PC-3 (cell line): ENCODE measurements at regions of chr6 and their contacts with region 1.

Region 1: GRCh38 chr6:145633981-145634627 is 101.2 kb downstream of the EPM2A start:
- DNase-seq: peak; percentile 86
- ATAC-seq: peak; percentile 82
- H3K4me3 ChIP-seq: no peak overlapping the region
- H3K27ac ChIP-seq: no peak overlapping the region
- H3K4me1 ChIP-seq: no peaks in the 10 kb centered on the region
- H3K27me3 ChIP-seq: no peaks in the 10 kb centered on the region
- CTCF ChIP-seq: peak; percentile 81

Region 2: GRCh38 chr6:145147981-145148783 is 485.9 kb before region 1 on chr6:
- CTCF ChIA-PET with region 1: no interaction called
- POLR2A ChIA-PET with region 1: no interaction called
- intact Hi-C with region 1: loop called (anchors 10 kb)
- DNase-seq: peak; percentile 91
- ATAC-seq: peak; percentile 70
- H3K4me3 ChIP-seq: no peak overlapping the region
- H3K27ac ChIP-seq: peak overlapping the region; percentile 50
- H3K4me1 ChIP-seq: peaks cover 31% of the 10 kb centered on the region
- H3K27me3 ChIP-seq: no peaks in the 10 kb centered on the region
- CTCF ChIP-seq: no peak

Region 3: GRCh38 chr6:145214570-145214969 is 419.5 kb before region 1 on chr6:
- CTCF ChIA-PET with region 1: no interaction called
- POLR2A ChIA-PET with region 1: no interaction called
- intact Hi-C with region 1: loop called (anchors 5 kb)
- DNase-seq: peak; percentile 53
- ATAC-seq: no peak
- H3K4me3 ChIP-seq: no peak overlapping the region
- H3K27ac ChIP-seq: no peak overlapping the region
- H3K4me1 ChIP-seq: no peaks in the 10 kb centered on the region
- H3K27me3 ChIP-seq: no peaks in the 10 kb centered on the region
- CTCF ChIP-seq: peak; percentile 66; the same call in 1 of the 2 replicates

Region 4: GRCh38 chr6:145349950-145350510 is 284.1 kb before region 1 on chr6:
- CTCF ChIA-PET with region 1: no interaction called
- POLR2A ChIA-PET with region 1: no interaction called
- intact Hi-C with region 1: loop called (anchors 5 kb)
- DNase-seq: no peak
- ATAC-seq: no peak
- H3K4me3 ChIP-seq: no peak overlapping the region
- H3K27ac ChIP-seq: no peak overlapping the region
- H3K4me1 ChIP-seq: no peaks in the 10 kb centered on the region
- H3K27me3 ChIP-seq: no peaks in the 10 kb centered on the region
- CTCF ChIP-seq: no peak

Region 5: DNA sequence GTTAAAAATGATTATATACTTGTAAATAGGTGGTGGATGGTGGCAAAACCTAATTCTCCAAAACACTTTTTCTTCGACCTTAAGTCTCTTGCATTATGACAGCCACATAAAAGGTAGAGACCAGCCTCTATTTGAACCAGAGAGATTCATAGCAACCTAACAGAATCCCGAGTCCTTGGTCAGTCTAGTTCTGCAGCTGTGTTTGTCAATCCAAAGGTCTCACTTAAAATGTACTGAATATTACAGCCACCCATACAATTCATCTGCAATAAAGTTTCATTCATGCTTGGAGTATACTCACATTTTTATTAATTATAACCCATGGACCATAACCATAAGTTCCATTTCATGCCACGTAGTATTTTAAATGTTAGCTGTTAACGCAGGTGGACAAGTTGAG is 14.0 kb after region 1 on chr6:
- CTCF ChIA-PET with region 1: no interaction called
- POLR2A ChIA-PET with region 1: no interaction called
- intact Hi-C with region 1: no loop called
- DNase-seq: no peak
- ATAC-seq: no peak
- H3K4me3 ChIP-seq: no peak overlapping the region
- H3K27ac ChIP-seq: no peak overlapping the region
- H3K4me1 ChIP-seq: no peaks in the 10 kb centered on the region
- H3K27me3 ChIP-seq: no peaks in the 10 kb centered on the region
- CTCF ChIP-seq: no peak

Region 6: GRCh38 chr6:145704143-145704781 is 70.2 kb after region 1 on chr6:
- CTCF ChIA-PET with region 1: interaction called, 5 read pairs
- POLR2A ChIA-PET with region 1: no interaction called
- intact Hi-C with region 1: loop called (anchors 1 kb)
- DNase-seq: peak; percentile 45
- ATAC-seq: no peak
- H3K4me3 ChIP-seq: no peak overlapping the region
- H3K27ac ChIP-seq: no peak overlapping the region
- H3K4me1 ChIP-seq: peaks cover 18% of the 10 kb centered on the region
- H3K27me3 ChIP-seq: no peaks in the 10 kb centered on the region
- CTCF ChIP-seq: peak; percentile 52

Region 7: DNA sequence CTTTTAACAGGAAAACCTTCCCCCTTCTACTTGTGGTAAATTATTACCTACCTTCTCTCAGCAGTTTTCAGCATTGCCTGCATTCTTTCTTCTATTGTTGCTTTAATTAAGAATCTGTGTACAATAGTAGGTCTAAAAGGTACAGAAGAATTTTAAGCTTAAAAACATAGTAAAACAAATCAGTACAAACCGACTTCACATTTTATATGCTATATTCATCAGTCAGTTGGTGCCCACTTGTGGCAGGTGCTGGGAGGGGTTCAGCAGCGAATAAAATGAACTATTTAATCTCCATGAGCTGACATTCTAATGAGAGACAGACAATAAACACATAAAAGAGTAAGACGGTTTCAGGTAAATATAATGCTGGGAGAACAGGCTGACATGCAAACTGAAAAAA is 253.9 kb after region 1 on chr6:
- CTCF ChIA-PET with region 1: no interaction called
- POLR2A ChIA-PET with region 1: no interaction called
- intact Hi-C with region 1: loop called (anchors 10 kb)
- DNase-seq: peak; percentile 26
- ATAC-seq: no peak
- H3K4me3 ChIP-seq: no peak overlapping the region
- H3K27ac ChIP-seq: no peak overlapping the region
- H3K4me1 ChIP-seq: peaks cover 15% of the 10 kb centered on the region
- H3K27me3 ChIP-seq: no peaks in the 10 kb centered on the region
- CTCF ChIP-seq: peak; percentile 66